ENCODE measurements at regions of chrX and their contacts with region 1.

Region 1: DNA sequence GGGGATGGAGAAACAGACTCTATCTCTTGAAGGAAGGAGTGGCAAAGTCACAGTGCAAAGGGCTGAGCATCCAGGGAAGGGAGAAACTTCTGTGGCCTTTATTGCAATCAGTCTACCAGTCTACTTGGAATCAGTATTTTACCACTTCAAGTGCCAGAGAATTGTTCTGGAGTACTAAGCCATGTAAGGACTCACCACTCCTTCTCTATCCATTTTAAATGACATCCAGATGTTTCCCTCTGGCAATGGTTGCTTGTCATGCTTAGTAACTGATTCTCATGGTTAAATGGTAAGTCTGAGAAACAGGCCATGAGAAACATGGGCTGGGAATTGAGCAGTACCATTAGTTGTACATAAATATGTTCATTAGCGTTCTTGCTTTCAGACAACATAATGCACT is 21.1 kb upstream of the SMIM10 start:
- DNase-seq: no peak
- ATAC-seq: no peak
- H3K4me3 Mint-ChIP-seq: no peak overlapping the region
- H3K27ac Mint-ChIP-seq: no peak overlapping the region
- H3K4me1 Mint-ChIP-seq: no peaks in the 10 kb centered on the region
- H3K27me3 Mint-ChIP-seq: no peaks in the 10 kb centered on the region
- CTCF ChIP-seq: no peak

Region 2: DNA sequence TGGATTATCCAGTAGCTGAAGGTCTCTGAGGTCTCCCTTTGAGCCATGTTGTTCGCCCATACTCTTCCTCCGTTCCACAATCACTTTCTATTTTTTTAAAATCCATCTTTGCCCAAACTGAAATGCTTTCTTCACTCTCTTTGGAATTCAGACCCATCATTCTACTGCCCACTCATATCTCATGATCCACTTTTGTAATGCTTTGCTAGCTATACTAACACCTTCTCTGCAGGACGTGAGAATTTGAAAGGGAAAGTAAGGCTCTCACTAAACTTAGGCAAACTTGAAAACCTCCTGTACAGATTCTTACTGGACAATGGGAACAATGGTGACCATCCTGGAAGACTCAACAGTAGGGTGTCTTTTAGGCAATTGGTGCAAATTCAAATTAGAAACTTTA is 91.0 kb after region 1 on chrX:
- CTCF ChIA-PET with region 1: no interaction called
- POLR2A ChIA-PET with region 1: no interaction called
- intact Hi-C with region 1: no loop called
- DNase-seq: no peak
- ATAC-seq: no peak
- H3K4me3 Mint-ChIP-seq: no peak overlapping the region
- H3K27ac Mint-ChIP-seq: no peak overlapping the region
- H3K4me1 Mint-ChIP-seq: no peaks in the 10 kb centered on the region
- H3K27me3 Mint-ChIP-seq: no peaks in the 10 kb centered on the region
- CTCF ChIP-seq: no peak

Region 3: DNA sequence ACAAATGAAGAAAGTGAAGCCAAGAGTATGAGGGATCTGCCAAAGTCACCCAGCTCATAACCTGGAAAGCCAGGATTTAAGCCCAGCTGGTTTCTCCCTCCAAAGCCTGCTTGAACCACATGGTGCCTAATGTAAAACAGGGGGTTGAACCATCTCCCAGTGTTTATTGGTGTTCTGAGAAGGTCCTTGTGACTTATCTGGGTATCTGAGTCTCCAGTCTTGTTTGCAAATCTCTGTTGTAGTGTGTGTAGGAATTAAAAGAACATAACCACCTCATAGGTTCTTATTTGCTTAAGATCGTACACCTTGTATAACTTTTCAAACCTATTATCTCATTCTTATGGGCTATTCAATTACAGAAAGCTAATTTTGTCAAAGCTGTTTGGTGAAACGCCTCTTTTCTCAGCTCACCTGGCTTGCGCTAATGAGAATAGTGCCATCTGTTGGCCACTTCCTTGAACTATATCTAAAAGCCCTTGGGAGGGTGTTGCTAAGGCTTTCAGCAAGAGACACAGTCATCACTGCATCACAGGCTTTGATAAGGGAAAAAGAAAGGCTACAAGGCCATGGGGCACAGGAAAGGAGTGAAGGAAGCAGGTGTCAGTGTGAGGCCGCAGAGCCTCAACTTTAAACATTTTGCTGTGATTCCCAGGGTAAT is 116.6 kb after region 1 on chrX:
- CTCF ChIA-PET with region 1: interaction called, 11 read pairs
- POLR2A ChIA-PET with region 1: no interaction called
- intact Hi-C with region 1: loop called (anchors 1 kb)
- DNase-seq: peak; percentile 48
- ATAC-seq: peak; percentile 99
- H3K4me3 Mint-ChIP-seq: no peak overlapping the region
- H3K27ac Mint-ChIP-seq: peak overlapping the region; percentile 65
- H3K4me1 Mint-ChIP-seq: peaks cover 5% of the 10 kb centered on the region
- H3K27me3 Mint-ChIP-seq: no peaks in the 10 kb centered on the region
- CTCF ChIP-seq: peak; percentile 51

Measured in activated CD8-positive, alpha-beta T cell treated with anti-CD3 and anti-CD28 coated beads for 36 hours (primary cell).